Caco-2 (cell line): ENCODE measurements at regions of chr1 and their contacts with region 1.

Region 1: GRCh38 chr1:150051089-150051373 is 16.5 kb upstream of the VPS45 start:
- DNase-seq: no peak
- H3K4me3 ChIP-seq: no peak overlapping the region
- H3K4me3 Mint-ChIP-seq: no peak overlapping the region
- H3K27ac Mint-ChIP-seq: no peak overlapping the region
- H3K4me1 ChIP-seq: no peaks in the 10 kb centered on the region
- H3K4me1 Mint-ChIP-seq: no peaks in the 10 kb centered on the region
- H3K27me3 ChIP-seq: no peaks in the 10 kb centered on the region
- H3K27me3 Mint-ChIP-seq: no peaks in the 10 kb centered on the region
- CTCF ChIP-seq: no peak

Region 2: GRCh38 chr1:149899460-149900293 is 151.4 kb before region 1 on chr1 and contains the start of gene BOLA1:
- CTCF ChIA-PET with region 1: no interaction called
- POLR2A ChIA-PET with region 1: no interaction called
- intact Hi-C with region 1: loop called (anchors 2 kb)
- DNase-seq: peak; percentile 93 to 95
- H3K4me3 ChIP-seq: peak within 1 kb of the TSS; percentile 76
- H3K4me3 Mint-ChIP-seq: peak within 1 kb of the TSS; percentile 89
- H3K27ac Mint-ChIP-seq: peak within 1 kb of the TSS; percentile 93
- H3K4me1 ChIP-seq: peaks cover 10% of the 10 kb centered on the region
- H3K4me1 Mint-ChIP-seq: peaks cover 30% of the 10 kb centered on the region
- H3K27me3 ChIP-seq: no peaks in the 10 kb centered on the region
- H3K27me3 Mint-ChIP-seq: no peaks in the 10 kb centered on the region
- CTCF ChIP-seq: peak in 1 of 2 experiments; percentile 0
- total RNA-seq, gene BOLA1: 22.7 and 22.9 TPM in 2 replicates

Region 3: DNA sequence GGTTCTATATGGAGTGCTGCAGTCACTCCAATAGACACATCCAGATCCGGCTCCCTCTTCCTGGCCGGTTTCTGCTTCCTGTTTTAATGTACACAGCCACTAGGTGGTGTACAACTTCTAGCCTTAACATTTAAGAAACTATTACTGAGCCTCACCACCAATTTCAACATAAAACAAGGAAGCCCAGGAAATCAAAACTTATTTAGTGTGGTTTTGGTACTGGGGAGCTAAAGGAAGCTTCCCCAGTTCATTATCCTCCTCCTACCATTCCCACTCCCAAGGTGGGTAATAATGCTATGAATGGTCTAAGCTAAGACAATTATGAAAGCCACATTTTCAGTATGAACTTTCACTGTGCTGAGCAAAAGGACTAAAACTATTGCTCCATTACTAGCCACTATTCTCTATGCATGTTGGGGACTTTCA is 88.9 kb before region 1 on chr1:
- CTCF ChIA-PET with region 1: interaction called, 13 read pairs
- POLR2A ChIA-PET with region 1: interaction called, 8 read pairs
- intact Hi-C with region 1: loop called (anchors 1 kb)
- DNase-seq: peak; percentile 59 to 69
- H3K4me3 ChIP-seq: no peak overlapping the region
- H3K4me3 Mint-ChIP-seq: no peak overlapping the region
- H3K27ac Mint-ChIP-seq: no peak overlapping the region
- H3K4me1 ChIP-seq: no peaks in the 10 kb centered on the region
- H3K4me1 Mint-ChIP-seq: no peaks in the 10 kb centered on the region
- H3K27me3 ChIP-seq: no peaks in the 10 kb centered on the region
- H3K27me3 Mint-ChIP-seq: no peaks in the 10 kb centered on the region
- CTCF ChIP-seq: peak; percentile 69 to 84

Region 4: GRCh38 chr1:150010393-150011115 is 40.5 kb before region 1 on chr1 and contains the start of gene OTUD7B:
- CTCF ChIA-PET with region 1: no interaction called
- POLR2A ChIA-PET with region 1: no interaction called
- intact Hi-C with region 1: loop called (anchors 2 kb)
- DNase-seq: peak; percentile 87 to 92
- H3K4me3 ChIP-seq: peak within 1 kb of the TSS; percentile 79
- H3K4me3 Mint-ChIP-seq: peak within 1 kb of the TSS; percentile 100
- H3K27ac Mint-ChIP-seq: peak within 1 kb of the TSS; percentile 100
- H3K4me1 ChIP-seq: peaks cover 36% of the 10 kb centered on the region
- H3K4me1 Mint-ChIP-seq: peaks cover 20% of the 10 kb centered on the region
- H3K27me3 ChIP-seq: no peaks in the 10 kb centered on the region
- H3K27me3 Mint-ChIP-seq: no peaks in the 10 kb centered on the region
- CTCF ChIP-seq: no peak
- total RNA-seq, gene OTUD7B: 18.3 and 19.6 TPM in 2 replicates

Region 5: DNA sequence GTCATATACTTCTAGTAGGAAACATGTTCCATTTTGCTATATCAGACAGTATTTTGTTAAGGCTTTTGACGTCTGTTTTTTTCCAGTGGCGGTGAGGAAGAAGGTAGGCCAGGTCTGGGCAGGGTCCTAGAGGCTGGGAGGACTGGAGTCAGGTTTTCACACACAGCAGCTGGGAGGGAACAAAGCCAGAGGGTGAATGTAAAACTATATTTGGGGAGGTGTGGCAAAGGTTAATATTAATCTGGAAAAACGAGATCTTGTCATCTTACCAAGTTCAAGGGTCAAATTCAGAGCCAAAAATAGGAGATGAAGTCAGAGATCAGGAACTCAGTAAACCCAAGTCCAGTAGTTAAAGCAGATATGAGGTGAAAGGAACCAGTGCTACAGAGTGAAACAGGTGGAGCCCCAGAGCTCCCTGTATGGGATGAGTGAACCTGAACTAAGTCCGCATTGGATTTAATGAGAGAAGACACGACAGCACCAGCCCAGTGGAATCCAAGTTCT is 29.8 kb before region 1 on chr1:
- CTCF ChIA-PET with region 1: interaction called, 3 read pairs
- POLR2A ChIA-PET with region 1: no interaction called
- intact Hi-C with region 1: loop called (anchors 1 kb)
- DNase-seq: peak; percentile 63 to 64
- H3K4me3 ChIP-seq: no peak overlapping the region
- H3K4me3 Mint-ChIP-seq: peak overlapping the region; percentile 36
- H3K27ac Mint-ChIP-seq: peak overlapping the region; percentile 72
- H3K4me1 ChIP-seq: peaks cover 47% of the 10 kb centered on the region
- H3K4me1 Mint-ChIP-seq: peaks cover 45% of the 10 kb centered on the region
- H3K27me3 ChIP-seq: no peaks in the 10 kb centered on the region
- H3K27me3 Mint-ChIP-seq: no peaks in the 10 kb centered on the region
- CTCF ChIP-seq: no peak